ENCODE measurements at regions of chr3 and their contacts with region 1.

Region 1: DNA sequence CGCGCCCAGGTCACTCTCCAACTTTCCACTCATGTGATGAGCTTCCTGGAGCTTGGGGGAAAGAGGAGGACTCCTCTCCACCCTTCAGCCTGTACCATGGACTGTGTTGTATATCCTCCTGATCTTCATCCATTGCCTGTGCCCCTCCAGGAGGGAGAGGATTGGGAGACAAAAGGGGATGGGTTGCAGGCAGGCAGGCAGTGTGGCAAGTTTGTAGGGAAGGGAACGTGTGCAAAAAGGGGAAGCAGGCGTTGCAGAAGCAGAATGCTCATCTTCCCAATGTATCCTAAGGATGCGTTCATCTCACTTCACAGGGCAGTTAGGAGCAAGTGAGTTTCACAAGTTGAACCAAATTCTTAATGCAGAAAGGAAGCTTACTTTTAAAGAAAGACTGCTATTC is 28.1 kb upstream of the GHSR start:
- DNase-seq: no peak
- H3K4me3 ChIP-seq: peak overlapping the region in 1 of 2 donors; percentile 46
- H3K27ac ChIP-seq: no peak overlapping the region
- H3K4me1 ChIP-seq: no peaks in the 10 kb centered on the region
- H3K27me3 ChIP-seq: no peaks in the 10 kb centered on the region
- CTCF ChIP-seq: no peak

Region 2: DNA sequence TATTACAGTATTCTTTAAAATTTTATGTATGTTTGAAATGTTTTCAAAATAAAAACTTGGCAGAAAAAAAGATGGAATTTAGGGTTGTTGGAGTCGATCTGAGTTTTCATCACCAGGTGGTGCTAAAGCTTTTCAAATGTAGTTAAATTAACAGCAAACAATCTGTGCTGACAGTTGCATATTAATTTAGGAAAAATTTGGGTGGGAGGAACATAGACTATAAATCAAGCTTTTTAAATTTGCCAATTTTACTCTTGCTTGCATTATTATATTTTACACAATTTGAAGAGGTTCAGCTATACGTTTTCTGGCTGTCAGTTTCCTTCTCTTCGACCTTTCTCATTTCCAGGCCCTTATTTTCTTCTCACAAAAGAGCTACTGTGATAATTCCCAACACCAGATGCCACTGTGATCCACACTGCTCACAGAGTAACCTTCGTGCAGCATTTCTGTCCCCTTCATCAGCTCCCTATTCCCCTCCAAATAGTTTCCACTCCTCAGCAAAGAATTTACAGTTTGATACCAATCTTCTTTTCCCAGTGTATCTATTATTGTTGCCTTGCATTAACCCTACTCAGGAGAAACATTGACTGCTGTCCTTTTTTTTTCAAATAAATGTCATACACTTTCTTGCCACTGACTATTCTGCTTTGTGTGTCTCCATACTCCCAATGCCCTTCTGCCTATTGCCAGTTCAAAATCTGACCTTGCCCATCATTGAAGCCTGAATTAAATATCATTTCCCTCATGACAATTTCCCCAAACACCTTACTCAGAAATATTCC is 1514.5 kb before region 1 on chr3:
- intact Hi-C with region 1: loop called (anchors 5 kb)
- DNase-seq: no peak
- H3K4me3 ChIP-seq: no peak overlapping the region
- H3K27ac ChIP-seq: no peak overlapping the region
- H3K4me1 ChIP-seq: no peaks in the 10 kb centered on the region
- H3K27me3 ChIP-seq: no peaks in the 10 kb centered on the region
- CTCF ChIP-seq: peak; percentile 63

Region 3: DNA sequence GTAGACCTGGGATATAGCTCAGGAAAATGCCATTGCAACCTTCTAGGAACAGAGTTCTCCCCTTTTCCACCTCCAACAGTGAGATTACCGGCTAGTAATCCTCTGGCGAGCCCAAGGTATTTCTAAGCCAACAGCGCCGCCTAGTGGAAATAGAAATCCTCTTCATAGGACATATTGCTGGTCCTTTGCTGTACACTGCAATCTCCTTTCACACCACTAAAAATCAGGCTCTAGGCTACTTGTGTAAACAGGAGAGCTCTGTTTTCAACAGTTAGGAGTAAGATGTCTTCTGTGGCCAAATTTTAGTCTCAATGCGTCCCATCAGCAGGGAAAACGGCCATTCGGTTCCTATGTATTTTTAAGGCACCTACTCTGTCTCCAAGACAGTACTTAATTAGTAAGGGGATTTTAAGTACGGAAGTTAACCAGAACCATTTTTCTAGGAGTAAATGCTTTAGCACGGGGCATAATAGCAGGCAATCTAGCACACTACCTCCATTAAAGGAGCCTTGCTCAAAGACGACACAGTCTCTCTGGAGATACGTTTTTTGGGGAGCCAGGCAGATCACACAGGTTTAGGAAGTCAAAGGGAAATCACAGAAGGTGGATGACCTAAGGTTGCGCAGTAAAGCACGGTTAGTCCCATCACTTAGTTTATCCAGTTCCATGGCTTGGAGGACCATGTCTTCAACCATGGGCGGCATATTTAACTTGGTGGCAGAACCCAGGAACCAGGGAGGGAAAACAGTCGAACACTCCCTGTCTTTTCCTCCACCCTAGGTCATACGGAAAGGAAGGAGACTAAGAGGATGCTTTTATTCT is 190.7 kb after region 1 on chr3:
- intact Hi-C with region 1: loop called (anchors 10 kb)
- DNase-seq: peak in 1 of 2 donors; percentile 70
- H3K4me3 ChIP-seq: no peak overlapping the region
- H3K27ac ChIP-seq: no peak overlapping the region
- H3K4me1 ChIP-seq: peaks cover 0 to 3% (median 0%) of the 10 kb centered on the region in 4 donors
- H3K27me3 ChIP-seq: no peaks in the 10 kb centered on the region
- CTCF ChIP-seq: peak; percentile 72 to 82

Measured in tibial artery (tissue), 4 donors.